MCF 10A (cell line): ENCODE measurements at regions of chr4 and their contacts with region 1.

Region 1: DNA sequence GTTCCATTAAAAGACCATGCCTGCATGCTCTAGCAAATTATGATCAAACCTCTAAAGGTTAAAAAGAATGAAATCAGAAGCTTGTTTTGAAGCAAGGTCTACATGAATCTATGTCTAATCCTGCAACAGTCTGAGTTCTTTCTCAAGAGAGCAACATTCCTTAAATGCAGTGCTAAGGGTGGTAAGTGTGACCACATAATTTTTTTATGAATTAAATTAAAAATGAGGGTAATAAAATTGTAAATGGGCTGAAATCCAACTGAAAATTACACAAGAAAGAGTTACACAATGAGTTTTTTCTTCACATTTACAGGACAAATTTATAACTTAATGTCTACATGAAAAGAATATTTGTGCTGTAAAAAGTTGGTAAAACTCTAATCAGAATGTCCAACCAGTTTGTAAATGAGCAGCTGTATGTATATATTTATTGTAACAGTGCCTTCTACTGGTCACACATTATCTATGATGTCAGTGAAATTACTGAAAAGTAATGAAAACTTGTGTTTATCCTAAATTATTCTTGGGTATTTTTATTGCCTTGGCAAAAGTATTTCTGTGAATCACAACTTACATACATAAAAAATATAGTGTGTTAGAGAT is 336.3 kb upstream of the PITX2 start:
- DNase-seq: peak; percentile 21
- H3K4me3 Mint-ChIP-seq: no peak overlapping the region
- H3K27ac Mint-ChIP-seq: no peak overlapping the region
- H3K4me1 Mint-ChIP-seq: no peaks in the 10 kb centered on the region
- H3K27me3 Mint-ChIP-seq: peaks cover 55% of the 10 kb centered on the region
- CTCF ChIP-seq: peak; percentile 46

Region 2: GRCh38 chr4:110654254-110654635 is 304.9 kb before region 1 on chr4:
- CTCF ChIA-PET with region 1: interaction called, 3 read pairs
- POLR2A ChIA-PET with region 1: no interaction called
- intact Hi-C with region 1: loop called (anchors 5 kb)
- DNase-seq: no peak
- H3K4me3 Mint-ChIP-seq: no peak overlapping the region
- H3K27ac Mint-ChIP-seq: no peak overlapping the region
- H3K4me1 Mint-ChIP-seq: no peaks in the 10 kb centered on the region
- H3K27me3 Mint-ChIP-seq: peaks cover 48% of the 10 kb centered on the region
- CTCF ChIP-seq: no peak

Region 3: DNA sequence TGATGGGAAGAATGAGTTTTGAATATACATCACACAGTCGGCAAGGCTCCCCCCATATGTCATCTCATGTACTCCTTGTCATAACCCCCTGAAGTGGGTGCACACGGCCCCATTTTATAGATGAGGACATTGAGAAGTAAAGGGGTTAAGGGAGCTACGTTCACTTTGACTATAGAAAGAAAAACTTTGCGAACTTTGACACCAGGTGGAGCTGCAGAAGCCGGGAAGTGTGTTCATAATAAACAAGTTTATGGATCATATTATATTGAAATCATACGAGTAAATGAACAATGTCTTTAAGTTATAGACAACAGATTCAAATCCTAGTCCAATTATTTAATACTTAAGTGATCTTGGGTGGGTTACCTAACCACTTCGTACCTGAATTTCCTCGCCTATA is 132.5 kb before region 1 on chr4:
- CTCF ChIA-PET with region 1: interaction called, 5 read pairs
- POLR2A ChIA-PET with region 1: no interaction called
- intact Hi-C with region 1: loop called (anchors 1 kb)
- DNase-seq: peak; percentile 10
- H3K4me3 Mint-ChIP-seq: no peak overlapping the region
- H3K27ac Mint-ChIP-seq: no peak overlapping the region
- H3K4me1 Mint-ChIP-seq: no peaks in the 10 kb centered on the region
- H3K27me3 Mint-ChIP-seq: peaks cover 19% of the 10 kb centered on the region
- CTCF ChIP-seq: peak; percentile 11

Region 4: GRCh38 chr4:111011458-111011857 is 52.3 kb after region 1 on chr4:
- CTCF ChIA-PET with region 1: no interaction called
- POLR2A ChIA-PET with region 1: no interaction called
- intact Hi-C with region 1: no loop called
- DNase-seq: no peak
- H3K4me3 Mint-ChIP-seq: no peak overlapping the region
- H3K27ac Mint-ChIP-seq: no peak overlapping the region
- H3K4me1 Mint-ChIP-seq: no peaks in the 10 kb centered on the region
- H3K27me3 Mint-ChIP-seq: peaks cover 25% of the 10 kb centered on the region
- CTCF ChIP-seq: no peak

Region 5: GRCh38 chr4:111283061-111283677 is 324.0 kb after region 1 on chr4:
- CTCF ChIA-PET with region 1: no interaction called
- POLR2A ChIA-PET with region 1: no interaction called
- intact Hi-C with region 1: loop called (anchors 10 kb)
- DNase-seq: peak; percentile 77
- H3K4me3 Mint-ChIP-seq: no peak overlapping the region
- H3K27ac Mint-ChIP-seq: no peak overlapping the region
- H3K4me1 Mint-ChIP-seq: no peaks in the 10 kb centered on the region
- H3K27me3 Mint-ChIP-seq: peaks cover 48% of the 10 kb centered on the region
- CTCF ChIP-seq: peak; percentile 81